HAP-1 (cell line): ENCODE measurements at regions of chr2 and their contacts with region 1.

Region 1: GRCh38 chr2:66434679-66435548 is at the start of gene MEIS1:
- DNase-seq: peak; percentile 92 to 93
- H3K4me3 ChIP-seq: peak within 1 kb of the TSS; percentile 58
- H3K4me1 ChIP-seq: no peaks in the 10 kb centered on the region
- H3K27me3 ChIP-seq: no peaks in the 10 kb centered on the region

Region 2: DNA sequence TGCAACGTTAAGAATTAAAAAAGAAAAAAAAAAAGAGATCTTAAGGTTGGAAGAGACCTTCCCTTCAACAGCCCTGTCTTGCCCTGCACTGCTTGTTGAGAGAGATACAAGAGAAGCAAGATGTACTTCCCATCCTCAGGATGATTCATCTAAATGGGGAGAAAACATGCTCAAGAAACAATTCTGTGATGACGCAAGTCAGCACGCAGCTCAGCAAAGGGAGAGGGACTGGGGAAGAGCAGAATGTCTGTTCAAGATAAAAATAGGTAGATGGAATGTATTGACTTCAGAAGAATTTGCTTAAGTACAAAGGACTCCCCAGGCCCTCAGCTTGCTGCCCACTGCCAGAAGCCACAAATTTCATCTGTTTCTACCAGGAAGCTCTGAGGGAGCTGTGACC is 804.3 kb before region 1 on chr2:
- in situ Hi-C with region 1: loop called (anchors 25 kb)
- DNase-seq: no peak
- H3K4me3 ChIP-seq: no peak overlapping the region
- H3K4me1 ChIP-seq: peaks cover 9% of the 10 kb centered on the region
- H3K27me3 ChIP-seq: no peaks in the 10 kb centered on the region

Region 3: DNA sequence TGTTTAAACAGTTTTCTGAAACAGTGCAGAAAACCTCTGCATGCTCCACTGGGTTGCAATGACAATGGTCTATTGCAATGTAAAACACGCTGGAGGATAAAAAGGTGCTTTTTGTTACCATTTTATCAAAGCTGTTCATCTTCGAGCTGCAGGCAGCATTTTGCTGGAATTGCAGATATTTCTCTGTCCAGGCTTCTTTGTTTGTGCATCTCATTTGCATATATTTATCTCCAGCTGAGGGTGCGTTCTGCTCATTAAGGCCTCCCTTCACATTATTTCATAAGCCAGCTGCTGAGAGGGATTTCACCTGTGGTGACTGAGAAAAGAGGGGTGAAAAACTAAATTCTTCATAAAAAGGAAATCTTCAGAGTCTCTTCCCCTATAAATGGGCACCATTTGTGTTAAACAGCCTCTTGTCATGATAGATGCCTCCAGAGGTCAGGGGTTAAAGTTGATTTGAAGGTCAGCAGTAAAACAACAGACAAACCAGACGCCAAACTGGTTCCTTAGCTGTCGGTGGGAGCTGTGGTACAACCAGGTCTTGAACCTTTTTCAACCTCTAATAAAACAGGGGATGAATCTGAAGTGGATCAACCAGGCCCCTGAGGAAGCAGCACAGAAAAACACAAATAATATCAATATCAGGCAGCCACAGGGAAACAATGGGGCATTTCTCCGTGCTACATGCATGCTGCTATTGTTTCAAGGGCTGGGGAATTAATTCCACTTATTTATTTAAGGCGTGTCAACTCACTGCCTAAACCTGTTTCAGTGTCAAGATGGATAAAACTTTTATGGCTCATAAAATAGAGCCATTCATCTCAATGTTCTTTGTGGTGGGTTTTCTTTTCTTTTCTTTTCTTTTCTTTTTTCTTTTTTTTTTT is 265.1 kb after region 1 on chr2:
- in situ Hi-C with region 1: loop called (anchors 25 kb)
- DNase-seq: peak; percentile 47 to 89
- H3K4me3 ChIP-seq: no peak overlapping the region
- H3K4me1 ChIP-seq: peaks cover 38% of the 10 kb centered on the region
- H3K27me3 ChIP-seq: peaks cover 2% of the 10 kb centered on the region; the same call in 1 of the 2 replicates

Region 4: GRCh38 chr2:66915237-66915636 is 480.3 kb after region 1 on chr2:
- in situ Hi-C with region 1: no loop called
- DNase-seq: no peak
- H3K4me3 ChIP-seq: no peak overlapping the region
- H3K4me1 ChIP-seq: no peaks in the 10 kb centered on the region
- H3K27me3 ChIP-seq: no peaks in the 10 kb centered on the region

Region 5: DNA sequence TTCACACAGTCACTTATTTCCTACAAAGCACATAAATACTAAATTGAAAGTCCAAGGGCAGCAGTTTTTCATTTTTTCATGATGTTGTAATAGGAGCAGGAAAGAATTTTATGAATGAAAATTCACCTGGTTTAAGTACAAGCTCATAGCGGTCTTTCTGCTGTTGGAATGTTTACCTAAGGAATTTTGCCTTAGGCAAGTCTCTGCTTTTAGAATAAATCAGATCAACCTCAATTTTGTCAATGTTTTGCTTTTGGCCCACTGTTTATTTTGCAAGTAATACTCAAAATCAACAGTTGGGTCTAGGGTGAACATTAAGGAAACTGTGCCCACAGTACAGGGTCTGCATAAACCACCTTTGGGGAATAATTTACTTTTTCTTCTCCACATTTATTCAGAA is 1002.3 kb after region 1 on chr2:
- in situ Hi-C with region 1: no loop called
- DNase-seq: peak in 1 of 2 experiments; percentile 25
- H3K4me3 ChIP-seq: no peak overlapping the region
- H3K4me1 ChIP-seq: no peaks in the 10 kb centered on the region; the same call in 1 of the 2 replicates
- H3K27me3 ChIP-seq: no peaks in the 10 kb centered on the region

Region 6: DNA sequence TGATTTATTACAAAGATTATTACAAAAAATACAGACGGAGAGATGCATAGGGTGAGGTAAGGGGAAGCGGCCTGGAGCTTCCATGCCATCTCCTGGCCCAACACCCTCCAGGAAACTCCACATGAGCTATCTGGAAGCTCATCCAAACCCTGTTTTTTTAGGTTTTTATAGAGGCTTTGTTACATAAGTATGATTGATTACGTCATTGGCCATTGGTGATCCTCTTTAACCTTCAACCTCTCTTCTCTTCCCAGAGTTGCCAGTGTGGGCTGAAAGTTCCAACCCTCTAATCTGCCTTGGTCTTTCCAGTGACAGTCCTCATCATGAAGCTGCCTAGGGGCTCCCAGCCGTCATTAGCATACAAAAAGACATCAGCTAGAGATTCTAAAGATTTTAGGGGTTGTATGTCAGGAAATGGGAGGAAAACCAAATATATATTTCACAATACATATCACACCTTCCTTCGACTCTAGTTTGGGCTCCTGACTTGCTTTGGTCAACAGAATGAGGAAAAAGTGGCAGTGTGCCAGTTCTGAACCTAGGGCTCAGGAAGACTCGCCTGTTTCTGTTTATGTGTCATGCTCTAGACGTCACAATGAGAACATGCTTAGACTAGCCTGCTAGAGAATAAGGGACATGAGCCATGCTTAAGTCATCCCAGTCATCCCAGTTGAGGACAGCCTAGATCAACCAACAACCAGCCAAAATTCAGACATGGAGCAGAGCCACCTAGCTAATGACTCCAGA is 1016.3 kb after region 1 on chr2:
- in situ Hi-C with region 1: loop called (anchors 25 kb)
- DNase-seq: no peak
- H3K4me3 ChIP-seq: no peak overlapping the region
- H3K4me1 ChIP-seq: no peaks in the 10 kb centered on the region
- H3K27me3 ChIP-seq: no peaks in the 10 kb centered on the region